ENCODE measurements at regions of chr4 and their contacts with region 1.

Region 1: DNA sequence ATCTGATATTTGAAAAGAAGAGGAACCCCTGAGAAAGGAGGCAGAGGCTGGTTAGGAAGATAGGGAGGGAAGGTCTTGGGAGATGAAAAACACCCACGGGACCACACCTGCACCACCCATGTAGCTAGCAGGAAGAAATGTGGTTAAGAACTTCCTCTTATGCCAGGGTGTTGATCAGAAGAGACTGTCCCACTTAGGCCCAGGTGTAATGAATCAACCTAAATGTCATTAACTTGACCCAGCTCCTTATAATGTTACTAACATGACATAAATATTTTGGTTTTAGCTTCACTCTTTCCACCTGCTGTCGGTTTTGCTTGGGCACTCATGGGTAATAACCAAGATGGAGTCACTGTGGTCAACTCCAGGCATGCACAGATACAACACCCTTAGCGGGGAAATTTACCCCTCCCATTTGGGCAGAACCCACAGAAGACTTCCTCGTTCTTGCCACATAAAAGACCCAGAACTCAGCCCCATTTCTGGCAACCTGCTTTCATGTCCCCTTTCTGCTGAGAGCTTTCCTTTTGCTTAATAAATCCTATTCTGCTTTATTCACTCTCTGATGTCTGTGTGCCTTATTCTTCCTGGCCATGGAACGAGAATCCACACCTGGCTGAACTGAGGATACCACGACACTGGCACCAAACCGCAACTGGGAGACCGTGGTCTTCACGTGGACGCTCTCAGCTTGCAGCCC is 46.8 kb downstream of the ZNF141 start:
- DNase-seq: no peak
- H3K4me3 ChIP-seq: no peak overlapping the region
- H3K27ac ChIP-seq: no peak overlapping the region
- H3K4me1 ChIP-seq: no peaks in the 10 kb centered on the region
- H3K27me3 ChIP-seq: no peaks in the 10 kb centered on the region
- CTCF ChIP-seq: no peak
- EP300 ChIP-seq: no peak
- POLR2A ChIP-seq: no peak

Region 2: DNA sequence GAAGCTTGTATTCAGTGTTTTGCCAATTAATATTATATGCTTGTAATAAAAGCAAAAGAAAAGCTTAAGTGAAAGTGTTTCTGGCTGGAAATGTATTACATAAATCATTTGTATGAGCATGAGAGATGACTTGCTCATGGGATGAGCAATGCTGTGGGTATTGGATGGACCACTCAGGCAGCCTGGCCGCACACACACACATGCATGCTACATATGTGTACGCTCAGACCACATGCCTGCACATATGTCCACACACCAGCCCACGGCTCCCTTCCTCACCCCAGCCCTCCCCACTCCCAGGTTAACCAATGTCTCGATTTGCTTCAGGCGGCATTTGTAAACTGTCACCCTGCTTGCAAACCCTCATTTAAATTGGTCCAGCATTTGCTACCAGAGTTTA is 385.6 kb after region 1 on chr4:
- in situ Hi-C with region 1: no loop called
- intact Hi-C with region 1: loop called (anchors 5 kb)
- DNase-seq: no peak
- H3K4me3 ChIP-seq: no peak overlapping the region
- H3K27ac ChIP-seq: no peak overlapping the region
- H3K4me1 ChIP-seq: peaks cover 0 to 16% (median 9%) of the 10 kb centered on the region in 4 donors
- H3K27me3 ChIP-seq: no peaks in the 10 kb centered on the region
- CTCF ChIP-seq: no peak
- EP300 ChIP-seq: no peak
- POLR2A ChIP-seq: no peak